ENCODE measurements at regions of chr1 and their contacts with region 1.

Region 1: DNA sequence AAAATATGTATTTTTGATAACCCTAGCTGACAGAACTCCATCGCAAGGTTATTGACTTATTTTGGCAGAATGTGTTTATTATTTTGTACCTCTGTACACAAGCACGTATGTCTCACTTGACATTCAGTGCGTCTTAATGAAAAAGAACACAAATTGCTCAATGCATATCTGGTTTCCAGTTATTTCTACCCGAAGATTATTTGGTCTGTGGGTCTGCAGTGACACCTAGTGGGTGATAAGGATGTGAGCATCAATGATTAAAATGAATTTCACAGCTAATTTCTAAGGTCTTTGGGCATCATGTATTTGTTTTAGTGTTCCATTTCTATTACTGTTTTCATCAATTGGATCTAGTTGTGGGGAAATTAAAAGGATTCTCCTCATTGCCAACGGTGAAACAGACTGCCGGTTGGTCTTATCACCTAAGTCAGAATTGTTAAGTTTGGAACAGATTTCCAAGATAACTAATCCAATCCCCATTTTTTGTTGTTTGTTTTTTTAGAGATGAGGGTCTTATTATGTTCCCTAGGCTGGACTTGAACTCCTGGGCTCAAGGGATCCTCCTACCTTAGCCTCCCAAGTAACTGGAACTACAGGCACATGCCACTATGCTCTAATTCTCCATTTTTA is 13.9 kb downstream of the DDX20 start:
- DNase-seq: peak in 1 of 3 donors; percentile 56
- ATAC-seq: peak; percentile 59
- H3K4me3 ChIP-seq: no peak overlapping the region
- H3K4me1 ChIP-seq: no peaks in the 10 kb centered on the region
- CTCF ChIP-seq: peak; percentile 39

Region 2: GRCh38 chr1:111481387-111482221 is 288.0 kb before region 1 on chr1:
- intact Hi-C with region 1: loop called in 1 of 2 experiments (anchors 10 kb)
- DNase-seq: peak; percentile 78 to 87 (median 85)
- ATAC-seq: peak; percentile 94
- H3K4me3 ChIP-seq: no peak overlapping the region
- H3K4me1 ChIP-seq: no peaks in the 10 kb centered on the region
- CTCF ChIP-seq: peak; percentile 37

Region 3: GRCh38 chr1:111538343-111539025 is 231.1 kb before region 1 on chr1:
- intact Hi-C with region 1: no loop called
- DNase-seq: peak in 1 of 3 donors; percentile 63
- ATAC-seq: peak; percentile 53
- H3K4me3 ChIP-seq: no peak overlapping the region
- H3K4me1 ChIP-seq: no peaks in the 10 kb centered on the region
- CTCF ChIP-seq: no peak

Region 4: DNA sequence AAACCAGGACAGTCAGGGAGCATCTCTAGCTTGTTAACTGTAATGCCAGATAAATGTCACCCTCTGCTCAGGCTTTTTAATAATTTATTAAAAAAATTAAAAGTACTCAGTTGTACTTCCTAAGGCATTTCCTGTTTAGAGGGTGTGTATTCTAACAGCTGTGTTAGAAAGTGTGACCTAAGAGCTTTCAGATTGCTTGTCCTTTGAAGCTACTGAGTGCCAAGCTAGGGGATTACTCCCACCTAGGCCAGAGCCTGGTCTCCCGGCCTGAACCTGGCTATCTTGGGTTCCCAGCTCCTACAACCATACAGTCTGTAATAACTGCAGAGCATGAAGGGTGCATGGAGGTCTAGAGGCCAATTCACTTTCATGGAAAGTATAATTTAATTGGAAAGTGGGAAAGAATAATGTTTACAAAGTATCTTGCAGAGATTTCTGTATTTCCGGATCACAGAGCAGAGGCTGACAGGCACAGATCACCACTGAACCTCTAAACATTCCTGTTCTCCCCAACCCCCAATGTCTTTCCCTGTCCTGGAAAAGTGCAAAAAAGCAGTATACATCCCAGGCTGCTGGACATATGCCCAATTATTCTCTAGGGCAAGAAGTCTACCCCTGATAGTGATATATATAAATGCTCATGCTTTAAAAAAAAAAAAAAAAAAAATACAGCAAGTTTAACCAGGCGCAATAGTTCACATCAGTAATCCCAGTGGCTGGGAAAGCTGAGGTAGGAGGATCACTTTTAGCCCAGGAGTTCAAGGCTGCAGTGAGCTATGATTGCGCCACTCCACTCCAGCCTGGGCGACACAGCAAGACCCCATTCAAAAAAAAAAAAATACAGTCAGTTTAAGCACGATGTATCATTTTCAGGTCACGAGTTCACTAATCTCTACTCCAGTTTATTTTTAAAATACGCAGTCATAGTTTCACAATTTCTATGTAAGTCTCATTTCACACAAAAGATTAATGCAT is 186.7 kb before region 1 on chr1:
- intact Hi-C with region 1: no loop called
- DNase-seq: no peak
- ATAC-seq: peak; percentile 29
- H3K4me3 ChIP-seq: no peak overlapping the region
- H3K4me1 ChIP-seq: no peaks in the 10 kb centered on the region
- CTCF ChIP-seq: no peak

Region 5: GRCh38 chr1:111719674-111720132 is 49.9 kb before region 1 on chr1:
- intact Hi-C with region 1: loop called in 1 of 2 experiments (anchors 10 kb)
- DNase-seq: peak in 1 of 3 donors; percentile 51
- ATAC-seq: peak; percentile 44
- H3K4me3 ChIP-seq: no peak overlapping the region
- H3K4me1 ChIP-seq: peaks cover 2% of the 10 kb centered on the region
- CTCF ChIP-seq: no peak

Region 6: DNA sequence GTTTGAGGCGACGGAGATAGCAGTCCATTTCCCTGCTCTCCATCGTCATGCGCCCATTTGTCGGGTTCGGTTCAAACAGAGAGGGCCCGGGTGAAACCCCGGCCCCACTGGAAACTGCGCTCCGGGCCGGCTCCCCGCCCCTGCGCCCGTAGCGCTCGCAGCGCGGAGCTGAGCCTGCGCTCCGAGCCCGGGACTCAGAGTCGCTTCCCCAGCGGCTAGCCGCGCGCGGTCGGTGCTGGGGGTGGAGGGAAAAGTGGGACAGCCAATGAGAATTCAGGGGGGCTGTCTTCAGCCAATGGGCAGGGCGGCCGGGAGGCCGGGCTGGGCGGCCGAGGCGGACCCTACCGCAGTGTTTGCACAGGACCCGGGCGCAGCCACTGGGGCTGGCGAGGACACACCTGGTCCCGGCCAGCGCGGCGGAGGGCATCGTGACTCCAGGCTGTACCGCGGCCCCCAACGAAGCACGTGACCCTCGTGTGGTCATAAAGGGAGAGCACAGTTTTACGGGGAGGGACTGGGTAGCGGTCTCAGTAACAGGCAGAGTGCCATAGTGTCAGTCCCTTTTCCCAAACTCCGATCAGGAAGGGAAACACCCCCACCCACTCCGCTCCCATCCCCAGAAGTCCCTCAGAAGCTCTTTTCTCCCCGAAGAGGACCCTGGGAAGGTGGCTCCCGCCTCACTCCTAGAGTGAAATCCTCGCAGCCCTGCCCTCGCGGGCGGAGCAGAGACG is 30.3 kb before region 1 on chr1 and contains the start of gene INKA2:
- intact Hi-C with region 1: no loop called
- DNase-seq: peak; percentile 86 to 94 (median 91)
- ATAC-seq: peak; percentile 89
- H3K4me3 ChIP-seq: peak within 1 kb of the TSS; percentile 16
- H3K4me1 ChIP-seq: peaks cover 3% of the 10 kb centered on the region
- CTCF ChIP-seq: no peak
- total RNA-seq, gene INKA2: 2.3 to 9.8 (median 2.5) TPM

Region 7: GRCh38 chr1:111827946-111828538 is 58.4 kb after region 1 on chr1:
- intact Hi-C with region 1: no loop called
- DNase-seq: no peak
- ATAC-seq: no peak
- H3K4me3 ChIP-seq: no peak overlapping the region
- H3K4me1 ChIP-seq: no peaks in the 10 kb centered on the region
- CTCF ChIP-seq: no peak

Measured in mucosa of descending colon (tissue), 3 donors.